Right cardiac atrium (tissue), 5 donors: ENCODE measurements at regions of chr6 and their contacts with region 1.

Region 1: DNA sequence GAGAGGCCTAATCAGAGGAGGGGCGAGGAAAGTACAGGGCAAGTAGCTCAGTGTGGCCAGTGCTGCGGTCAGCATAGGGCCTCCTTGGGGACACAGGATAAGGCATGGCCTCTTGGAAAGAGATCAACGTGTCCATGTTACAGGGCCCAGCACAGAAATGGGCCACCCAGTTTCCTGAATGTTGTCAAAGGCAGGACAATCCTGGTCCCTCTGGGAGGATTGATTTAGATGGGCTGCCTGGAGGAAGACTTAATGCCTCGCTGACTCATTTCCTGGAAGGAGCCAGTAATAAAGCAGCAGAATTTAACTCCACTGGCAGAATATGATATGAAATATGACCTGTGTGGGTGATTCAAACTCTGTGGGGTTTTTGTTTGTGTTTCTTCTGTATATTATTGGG is 16.6 kb downstream of the DDO start:
- DNase-seq: no peak
- ATAC-seq: peak in 1 of 2 donors; percentile 38
- H3K4me3 ChIP-seq: no peak overlapping the region
- H3K27ac ChIP-seq: no peak overlapping the region
- H3K4me1 ChIP-seq: peaks cover 2% of the 10 kb centered on the region
- H3K27me3 ChIP-seq: no peaks in the 10 kb centered on the region

Region 2: DNA sequence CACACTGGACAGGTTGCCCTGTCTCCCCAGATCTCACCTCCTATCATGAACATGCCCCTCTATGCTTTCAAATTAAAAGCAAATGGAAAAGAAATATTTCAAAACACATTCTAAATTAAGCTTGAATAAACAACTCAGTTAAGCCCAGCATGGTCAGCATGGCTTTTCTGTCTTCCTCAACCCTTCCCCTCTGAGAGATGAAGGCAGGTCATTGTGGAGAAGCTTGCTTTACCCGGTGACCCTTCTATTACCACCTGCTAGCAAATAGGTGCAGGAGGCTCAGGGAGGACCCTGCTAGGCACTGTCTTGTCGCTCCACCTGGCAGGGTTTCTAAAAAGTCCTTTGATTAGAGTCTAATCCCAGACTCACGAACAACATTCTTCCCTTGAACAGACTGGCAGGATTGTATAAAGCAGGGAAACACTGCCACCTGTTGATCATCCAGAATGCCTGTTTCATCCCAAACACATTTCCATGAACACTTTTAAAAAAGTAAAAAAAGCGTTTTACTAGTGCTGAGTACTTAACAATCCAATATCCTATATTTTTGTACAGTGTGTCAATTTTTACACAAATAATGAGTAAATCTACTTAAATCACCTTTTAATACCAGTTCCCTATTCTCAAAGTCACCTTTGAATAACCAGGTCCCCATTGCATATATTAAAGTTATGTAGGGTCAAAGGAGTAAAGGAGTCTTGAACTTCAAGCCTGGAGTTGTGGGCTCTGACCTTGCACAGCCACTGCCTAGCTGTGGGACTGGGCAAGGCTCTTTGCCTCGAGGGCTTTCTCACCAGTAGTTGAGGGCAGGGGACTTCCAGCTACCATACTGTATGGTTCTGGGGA is 345.2 kb before region 1 on chr6:
- intact Hi-C with region 1: loop called in 1 of 4 experiments (anchors 10 kb)
- DNase-seq: no peak
- ATAC-seq: peak; percentile 55 to 61
- H3K4me3 ChIP-seq: no peak overlapping the region
- H3K27ac ChIP-seq: no peak overlapping the region
- H3K4me1 ChIP-seq: no peaks in the 10 kb centered on the region
- H3K27me3 ChIP-seq: no peaks in the 10 kb centered on the region

Region 3: DNA sequence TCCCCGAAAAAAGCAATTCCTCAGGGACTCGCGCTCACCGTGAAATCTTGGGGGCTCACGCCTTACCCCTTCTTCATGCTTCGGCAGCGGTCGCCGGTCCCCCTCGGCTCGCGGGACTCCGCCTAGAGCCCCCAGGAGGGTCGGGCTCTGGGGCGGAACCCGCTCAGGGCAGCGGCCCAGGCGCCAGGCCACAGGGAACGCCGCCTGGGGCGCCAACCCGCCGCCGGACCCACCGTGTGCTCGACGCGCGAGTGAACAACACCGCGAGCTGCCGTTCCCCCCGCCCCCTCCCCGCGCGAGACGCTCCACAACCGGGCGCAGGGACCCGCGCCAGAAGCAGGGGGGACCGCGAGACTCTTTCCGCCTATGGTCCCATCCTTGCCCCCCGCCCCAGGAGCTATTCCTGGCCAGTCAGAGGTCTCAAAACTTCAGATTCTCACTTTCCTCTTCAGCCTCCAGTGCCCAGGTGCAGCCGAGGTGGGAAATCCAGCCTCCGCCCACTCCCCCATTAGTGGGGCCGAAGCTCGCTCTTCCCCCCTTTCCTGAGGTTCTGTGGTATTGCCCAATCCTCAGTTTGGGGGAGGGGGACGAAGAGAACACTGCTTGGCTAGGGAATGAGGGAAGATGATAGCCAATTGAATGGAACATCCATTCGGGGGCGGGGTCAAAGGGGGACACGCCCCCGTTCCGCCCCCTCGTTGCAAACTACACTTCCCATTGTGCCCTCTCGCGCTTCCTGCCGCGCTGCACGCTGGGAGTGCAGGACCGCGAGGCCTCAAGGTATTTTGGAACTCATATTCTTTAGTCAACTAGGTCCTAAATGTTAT is 219.2 kb before region 1 on chr6 and contains the start of gene WASF1:
- intact Hi-C with region 1: loop called in 2 of 4 experiments (anchors 5 to 10 kb)
- DNase-seq: peak; percentile 94 to 98 (median 97)
- ATAC-seq: peak; percentile 99
- H3K4me3 ChIP-seq: peak within 1 kb of the TSS; percentile 86
- H3K27ac ChIP-seq: peak within 1 kb of the TSS; percentile 93
- H3K4me1 ChIP-seq: peaks cover 6% of the 10 kb centered on the region
- H3K27me3 ChIP-seq: no peaks in the 10 kb centered on the region
- total RNA-seq, gene WASF1: 1.5 to 3.6 (median 2.3) TPM

Region 4: DNA sequence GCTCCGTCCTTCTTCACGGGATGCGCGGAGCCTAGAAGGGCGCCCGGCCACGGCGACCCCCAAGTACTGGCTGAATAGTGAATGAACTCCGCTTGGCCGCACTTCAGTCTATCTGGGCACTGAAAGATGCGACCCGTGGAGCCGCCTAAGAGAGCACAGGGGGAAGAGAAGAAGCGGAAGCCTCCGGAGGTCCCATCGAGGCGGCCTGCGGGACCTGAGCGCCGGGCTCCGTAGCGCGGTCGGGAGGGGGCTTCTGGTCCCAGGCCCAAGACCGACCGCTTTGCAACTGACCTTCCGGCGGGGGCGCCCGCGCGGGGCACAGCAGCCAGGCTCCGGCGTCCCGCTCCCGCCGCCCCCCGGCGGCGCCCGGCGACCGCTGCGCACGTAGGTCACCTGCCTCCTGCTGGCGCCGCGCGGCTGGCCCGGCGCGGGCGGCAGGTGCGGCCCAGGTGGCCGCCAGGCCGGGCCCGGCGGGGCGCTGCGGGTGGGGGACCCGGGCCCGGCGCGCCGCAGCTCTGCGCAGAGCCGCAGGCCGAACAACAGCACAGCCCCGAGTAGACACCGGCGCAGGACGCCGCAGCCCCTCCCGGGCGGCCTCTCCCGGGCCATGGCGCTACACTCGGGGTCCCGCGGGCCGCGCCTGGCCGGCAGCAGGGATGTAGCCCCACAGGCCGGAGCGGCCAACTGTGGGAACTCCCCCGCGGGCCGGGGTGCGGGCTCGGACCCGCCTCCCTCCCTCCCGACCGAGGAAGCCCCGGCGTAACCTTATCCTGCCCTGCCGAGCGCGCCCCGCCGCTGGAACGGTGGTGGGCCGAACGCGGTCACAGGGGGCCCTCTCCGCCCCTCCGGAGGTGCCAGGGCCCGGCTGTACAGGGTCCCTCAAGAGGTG is 40.9 kb before region 1 on chr6 and contains the start of gene METTL24:
- intact Hi-C with region 1: no loop called
- DNase-seq: peak; percentile 27 to 75 (median 71)
- ATAC-seq: peak; percentile 73 to 74
- H3K4me3 ChIP-seq: peak within 1 kb of the TSS; percentile 91
- H3K27ac ChIP-seq: peak within 1 kb of the TSS; percentile 81
- H3K4me1 ChIP-seq: peaks cover 2% of the 10 kb centered on the region
- H3K27me3 ChIP-seq: no peaks in the 10 kb centered on the region
- total RNA-seq, gene METTL24: 3.5 to 4.2 (median 3.8) TPM